SK-N-SH (cell line): ENCODE measurements at regions of chr7 and their contacts with region 1.

Region 1: GRCh38 chr7:36670585-36671431 is 53.5 kb downstream of the AOAH start:
- DNase-seq: peak; percentile 70
- H3K4me3 ChIP-seq: no peak overlapping the region; a peak in 1 of 4 replicates
- H3K27ac ChIP-seq: no peak overlapping the region
- H3K4me1 ChIP-seq: no peaks in the 10 kb centered on the region; a peak in 1 of 4 replicates
- H3K27me3 ChIP-seq: no peaks in the 10 kb centered on the region; the same call in 1 of the 2 replicates
- CTCF ChIP-seq: peak; percentile 99
- EP300 ChIP-seq: no peak
- RAD21 ChIP-seq: peak; percentile 86

Region 2: GRCh38 chr7:36155811-36156361 is 514.9 kb before region 1 on chr7:
- CTCF ChIA-PET with region 1: no interaction called
- POLR2A ChIA-PET with region 1: no interaction called
- DNase-seq: peak; percentile 54
- H3K4me3 ChIP-seq: no peak overlapping the region; a peak in 2 of 4 replicates
- H3K27ac ChIP-seq: no peak overlapping the region
- H3K4me1 ChIP-seq: peaks cover 0 to 45% of the 10 kb centered on the region in 2 experiments; a peak in 2 of 4 replicates
- H3K27me3 ChIP-seq: no peaks in the 10 kb centered on the region
- CTCF ChIP-seq: peak; percentile 17
- EP300 ChIP-seq: no peak
- RAD21 ChIP-seq: peak; percentile 30; the same call in 1 of the 2 replicates

Region 3: DNA sequence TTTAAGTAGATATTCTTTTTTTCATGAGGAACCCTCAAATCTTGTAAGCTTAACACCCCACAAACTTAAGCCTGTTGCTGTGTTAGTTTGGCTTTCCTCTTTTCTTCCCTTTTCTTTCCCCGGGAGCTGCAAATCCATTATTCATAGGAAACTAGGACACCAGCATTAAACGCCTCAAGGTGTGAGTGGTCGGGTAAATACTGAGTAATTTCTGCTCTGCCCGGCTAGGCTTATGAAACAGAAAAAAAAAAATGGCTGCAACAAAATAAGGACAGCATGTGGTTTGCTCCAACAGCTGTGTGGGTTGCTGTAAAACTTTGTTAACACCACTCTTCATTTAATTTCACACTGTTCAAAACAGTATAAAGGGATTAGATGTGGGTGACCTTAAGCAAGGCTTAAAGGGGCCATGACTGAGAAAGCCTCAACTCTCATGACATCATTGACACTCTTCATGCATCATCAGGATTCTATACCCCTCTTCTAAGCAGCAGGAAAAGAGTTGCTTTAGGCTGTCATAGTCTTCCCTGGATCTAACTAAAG is 50.6 kb before region 1 on chr7:
- CTCF ChIA-PET with region 1: interaction called, 13 read pairs
- POLR2A ChIA-PET with region 1: no interaction called
- DNase-seq: no peak
- H3K4me3 ChIP-seq: no peak overlapping the region
- H3K27ac ChIP-seq: no peak overlapping the region
- H3K4me1 ChIP-seq: no peaks in the 10 kb centered on the region; a peak in 1 of 4 replicates
- H3K27me3 ChIP-seq: peaks cover 3% of the 10 kb centered on the region; the same call in 1 of the 2 replicates
- CTCF ChIP-seq: no peak
- EP300 ChIP-seq: no peak
- RAD21 ChIP-seq: no peak

Region 4: DNA sequence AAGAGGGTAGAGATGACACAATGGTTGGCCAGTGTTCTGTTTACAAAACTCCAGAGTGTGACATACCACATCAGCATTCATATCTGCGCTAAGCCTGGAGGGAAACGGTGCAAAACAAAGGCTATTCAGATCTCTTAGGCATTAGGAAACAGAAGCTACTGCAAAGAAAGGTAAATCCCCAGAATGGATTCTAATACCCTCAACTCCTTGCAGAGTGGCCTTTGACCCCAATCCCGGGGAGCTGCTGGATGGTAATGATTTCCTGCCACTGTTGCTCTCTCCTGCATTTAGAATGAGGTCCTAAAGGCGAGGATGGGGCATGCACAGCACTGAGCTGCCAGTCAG is 11.7 kb before region 1 on chr7:
- CTCF ChIA-PET with region 1: interaction called, 15 read pairs
- POLR2A ChIA-PET with region 1: no interaction called
- DNase-seq: no peak
- H3K4me3 ChIP-seq: 0 out of 4 replicates have a peak overlapping the region, but pooled peaks of 1 of the 2 experiments have one; percentile 4
- H3K27ac ChIP-seq: peak overlapping the region in 1 of 2 experiments; percentile 85; a peak in 3 of 4 replicates
- H3K4me1 ChIP-seq: peaks cover 14 to 18% of the 10 kb centered on the region in 2 experiments
- H3K27me3 ChIP-seq: no peaks in the 10 kb centered on the region
- CTCF ChIP-seq: no peak
- EP300 ChIP-seq: no peak
- RAD21 ChIP-seq: no peak

Region 5: DNA sequence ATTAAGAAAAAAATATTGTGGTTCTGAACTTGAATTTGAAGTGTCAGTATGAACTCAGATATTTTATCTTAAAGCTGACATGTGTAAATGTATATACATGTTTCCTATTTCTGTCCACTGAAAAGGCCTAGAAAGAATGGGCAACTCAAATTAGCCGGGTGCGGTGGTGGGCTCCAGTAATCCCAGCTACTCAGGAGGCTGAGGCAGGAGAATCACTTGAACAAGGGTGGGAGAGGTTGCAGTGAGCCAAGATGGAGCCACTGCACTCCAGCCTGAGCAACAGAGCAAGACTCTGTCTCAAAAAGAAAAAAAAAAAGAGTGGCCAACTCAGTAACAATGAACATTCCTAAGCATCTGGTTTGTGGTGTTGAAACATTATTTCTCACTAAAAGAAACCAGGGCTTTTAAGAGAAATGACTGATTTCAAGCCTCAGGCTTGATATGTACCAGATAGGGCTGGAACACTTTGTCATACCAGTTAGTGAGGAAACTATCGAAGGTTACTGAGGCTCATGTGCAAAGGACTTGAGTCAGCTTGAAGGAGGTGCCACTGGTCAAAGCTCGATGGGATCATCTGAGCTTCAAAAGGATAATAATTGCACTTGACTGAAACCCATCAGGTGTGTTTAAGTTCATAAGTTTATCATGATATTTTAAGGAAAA is 13.0 kb after region 1 on chr7:
- CTCF ChIA-PET with region 1: interaction called, 50 read pairs
- POLR2A ChIA-PET with region 1: no interaction called
- DNase-seq: no peak
- H3K4me3 ChIP-seq: no peak overlapping the region
- H3K27ac ChIP-seq: no peak overlapping the region
- H3K4me1 ChIP-seq: no peaks in the 10 kb centered on the region; a peak in 2 of 4 replicates
- H3K27me3 ChIP-seq: no peaks in the 10 kb centered on the region
- CTCF ChIP-seq: no peak
- EP300 ChIP-seq: no peak
- RAD21 ChIP-seq: no peak